GM10248 (cell line): ENCODE measurements at regions of chr14 and their contacts with region 1.

Region 1: DNA sequence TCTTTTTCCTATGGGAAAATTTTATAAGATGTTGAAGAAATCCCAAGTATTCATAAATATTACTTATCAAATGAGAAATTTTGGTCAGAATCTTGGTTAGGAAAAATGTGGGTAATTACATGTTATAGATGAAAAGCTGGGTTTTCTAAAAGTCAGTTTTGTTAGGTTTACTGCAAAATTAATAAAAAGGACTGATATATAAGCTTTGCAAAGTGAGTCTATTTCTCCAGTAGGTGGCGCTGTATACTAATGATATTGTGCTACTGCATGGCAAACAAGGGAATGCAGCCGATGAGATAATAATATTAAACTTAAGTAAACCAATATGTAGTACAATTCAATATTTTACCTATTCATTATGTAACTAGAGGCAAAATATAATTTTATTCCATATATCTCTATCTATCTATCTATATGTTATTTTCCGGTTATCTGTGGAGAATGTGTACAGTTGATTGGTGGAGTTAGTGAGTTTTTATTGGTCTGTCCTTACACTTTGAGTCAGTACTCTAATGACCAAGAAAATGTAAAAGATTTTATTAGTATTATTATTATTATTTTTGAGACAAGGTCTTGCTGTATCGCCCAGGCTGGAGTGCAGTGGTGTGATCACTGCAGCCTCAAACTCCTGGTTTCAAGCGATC is 32.9 kb downstream of the MIPOL1 start:
- DNase-seq: peak; percentile 21
- CTCF ChIP-seq: peak; percentile 70

Region 2: DNA sequence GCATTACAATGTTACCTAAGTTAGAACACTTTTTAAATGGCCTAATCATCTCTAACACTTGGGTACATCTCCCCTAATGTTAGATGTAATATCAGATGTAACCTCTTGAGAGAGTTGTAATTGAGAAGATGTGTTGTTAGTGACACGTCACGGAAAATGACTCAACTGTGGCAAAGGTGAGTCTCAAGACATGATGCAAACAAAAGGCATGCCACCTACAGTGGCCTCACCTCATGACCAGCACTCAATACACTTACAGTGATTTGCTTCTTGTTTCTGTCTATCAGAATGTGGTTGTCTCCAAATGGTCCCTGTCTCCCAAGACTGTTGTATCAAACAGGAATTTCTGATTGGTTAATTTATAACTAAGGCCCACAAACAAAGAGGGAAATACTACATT is 149.5 kb before region 1 on chr14:
- CTCF ChIA-PET with region 1: no interaction called
- POLR2A ChIA-PET with region 1: no interaction called
- DNase-seq: no peak
- CTCF ChIP-seq: no peak

Region 3: GRCh38 chr14:37179896-37180502 is 50.7 kb before region 1 on chr14:
- CTCF ChIA-PET with region 1: no interaction called
- POLR2A ChIA-PET with region 1: no interaction called
- DNase-seq: no peak
- CTCF ChIP-seq: no peak

Region 4: DNA sequence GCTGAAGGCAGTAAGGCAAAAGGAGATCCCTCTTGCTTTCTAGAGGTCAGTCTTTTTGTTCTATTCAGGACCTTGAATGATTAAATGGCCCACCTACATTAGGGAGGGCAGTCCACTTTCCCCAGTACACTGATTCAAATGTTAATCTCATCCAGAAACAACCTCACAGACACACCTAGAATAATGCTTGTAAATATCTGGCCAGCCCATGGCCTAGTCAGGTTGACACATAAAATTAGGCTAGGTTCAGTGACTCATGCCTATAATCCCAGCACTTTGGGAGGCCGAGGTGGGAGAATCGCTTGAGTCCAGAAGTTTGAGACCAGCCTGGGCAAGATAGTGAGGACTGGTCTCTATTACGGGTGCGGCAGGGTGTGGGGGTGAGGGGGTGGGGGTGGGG is 10.5 kb after region 1 on chr14:
- CTCF ChIA-PET with region 1: interaction called, 24 read pairs
- POLR2A ChIA-PET with region 1: no interaction called
- DNase-seq: no peak
- CTCF ChIP-seq: no peak

Region 5: DNA sequence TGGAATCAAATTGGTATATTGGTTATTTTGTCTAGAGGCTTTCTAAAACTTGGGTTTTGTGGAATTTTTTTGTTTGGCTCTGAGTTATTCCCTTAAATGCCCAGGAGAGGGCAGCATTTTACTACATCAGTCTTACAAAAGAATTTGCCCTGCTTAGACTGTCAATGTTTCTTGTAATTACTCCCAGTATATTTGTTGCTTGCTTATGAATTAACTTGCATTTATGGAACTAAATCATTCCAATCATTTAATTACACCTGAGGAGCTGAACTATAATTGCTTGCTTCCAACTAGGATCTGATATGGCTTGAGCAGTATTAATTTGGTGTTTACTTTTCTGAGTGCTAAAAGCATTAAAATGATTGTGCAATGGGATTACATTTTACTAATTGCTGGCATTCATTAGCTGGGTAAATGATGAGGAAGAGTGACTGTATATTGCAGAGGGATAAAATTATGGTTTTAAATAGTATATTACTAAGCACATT is 15.8 kb after region 1 on chr14:
- CTCF ChIA-PET with region 1: interaction called, 24 read pairs
- POLR2A ChIA-PET with region 1: no interaction called
- DNase-seq: peak; percentile 19
- CTCF ChIP-seq: peak; percentile 58

Region 6: GRCh38 chr14:37340355-37340754 is 109.7 kb after region 1 on chr14:
- CTCF ChIA-PET with region 1: no interaction called
- POLR2A ChIA-PET with region 1: no interaction called
- DNase-seq: no peak
- CTCF ChIP-seq: no peak

Region 7: GRCh38 chr14:37874429-37875191 is 643.9 kb after region 1 on chr14:
- CTCF ChIA-PET with region 1: interaction called, 25 read pairs
- POLR2A ChIA-PET with region 1: no interaction called
- DNase-seq: peak; percentile 60
- CTCF ChIP-seq: peak; percentile 85